A673 (cell line): ENCODE measurements at regions of chr5 and their contacts with region 1.

Region 1: GRCh38 chr5:39608024-39608423 is 183.2 kb upstream of the DAB2 start:
- DNase-seq: peak; percentile 72
- H3K4me3 ChIP-seq: no peak overlapping the region
- H3K27ac ChIP-seq: no peak overlapping the region
- H3K4me1 ChIP-seq: no peaks in the 10 kb centered on the region
- H3K27me3 ChIP-seq: no peaks in the 10 kb centered on the region
- CTCF ChIP-seq: no peak

Region 2: DNA sequence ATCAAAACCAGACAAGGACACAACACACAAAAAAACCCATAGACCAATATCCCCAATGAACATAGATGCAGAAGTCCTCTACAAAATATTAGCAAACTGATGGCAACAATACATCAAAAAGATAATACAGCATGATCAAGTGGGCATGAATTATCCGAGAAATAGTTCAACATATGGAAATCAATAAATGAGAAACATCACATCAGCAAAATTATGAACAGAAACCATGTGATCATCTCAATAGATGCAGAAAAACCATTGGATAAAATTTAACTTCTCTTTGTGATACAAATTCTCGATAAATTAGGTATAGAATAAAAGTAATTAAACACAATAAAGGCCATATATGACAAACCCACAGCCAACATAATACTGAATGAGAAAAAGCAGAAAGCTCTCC is 313.3 kb before region 1 on chr5:
- CTCF ChIA-PET with region 1: no interaction called
- POLR2A ChIA-PET with region 1: no interaction called
- intact Hi-C with region 1: no loop called
- DNase-seq: no peak
- H3K4me3 ChIP-seq: no peak overlapping the region
- H3K27ac ChIP-seq: no peak overlapping the region
- H3K4me1 ChIP-seq: no peaks in the 10 kb centered on the region
- H3K27me3 ChIP-seq: no peaks in the 10 kb centered on the region
- CTCF ChIP-seq: no peak

Region 3: DNA sequence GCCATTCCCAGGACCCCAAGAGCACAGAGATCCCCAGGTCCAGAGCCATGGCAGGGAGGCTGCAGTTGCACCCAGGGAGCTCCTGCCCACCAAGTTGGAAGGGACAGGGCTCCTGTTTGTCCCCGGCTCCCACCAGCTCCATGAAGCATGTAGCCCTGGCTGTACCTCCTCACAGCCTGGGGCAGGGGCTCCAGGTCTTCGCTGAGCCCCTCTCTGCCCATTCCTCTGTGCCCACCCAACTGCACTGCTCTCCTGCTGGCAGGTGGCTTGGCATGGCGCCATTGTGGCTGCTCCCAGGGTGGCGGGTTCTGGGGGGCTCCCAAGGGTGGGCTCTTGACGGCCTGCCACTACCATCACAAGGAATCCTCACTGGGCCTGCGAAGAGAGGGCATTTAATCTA is 14.3 kb after region 1 on chr5:
- CTCF ChIA-PET with region 1: no interaction called
- POLR2A ChIA-PET with region 1: interaction called, 13 read pairs
- intact Hi-C with region 1: no loop called
- DNase-seq: no peak
- H3K4me3 ChIP-seq: no peak overlapping the region
- H3K27ac ChIP-seq: no peak overlapping the region
- H3K4me1 ChIP-seq: peaks cover 9% of the 10 kb centered on the region
- H3K27me3 ChIP-seq: no peaks in the 10 kb centered on the region
- CTCF ChIP-seq: no peak